Naive thymus-derived CD4-positive, alpha-beta T cell (primary cell): ENCODE measurements at regions of chr1 and their contacts with region 1.

Region 1: GRCh38 chr1:40404670-40405462 is 31.3 kb downstream of the SMAP2 start:
- DNase-seq: peak in 7 of 9 donors; percentile 65 to 84 (median 78)
- ATAC-seq: peak; percentile 85
- H3K4me3 ChIP-seq: no peak overlapping the region
- H3K4me3 Mint-ChIP-seq: peak overlapping the region; percentile 0 to 85 (median 71)
- H3K27ac ChIP-seq: peak overlapping the region; percentile 92
- H3K27ac Mint-ChIP-seq: peak overlapping the region; percentile 84 to 98 (median 92)
- H3K4me1 ChIP-seq: peaks cover 40 to 52% of the 10 kb centered on the region in 2 donors
- H3K4me1 Mint-ChIP-seq: peaks cover 42 to 92% (median 79%) of the 10 kb centered on the region in 7 donors
- H3K27me3 ChIP-seq: no peaks in the 10 kb centered on the region
- H3K27me3 Mint-ChIP-seq: no peaks in the 10 kb centered on the region

Region 2: DNA sequence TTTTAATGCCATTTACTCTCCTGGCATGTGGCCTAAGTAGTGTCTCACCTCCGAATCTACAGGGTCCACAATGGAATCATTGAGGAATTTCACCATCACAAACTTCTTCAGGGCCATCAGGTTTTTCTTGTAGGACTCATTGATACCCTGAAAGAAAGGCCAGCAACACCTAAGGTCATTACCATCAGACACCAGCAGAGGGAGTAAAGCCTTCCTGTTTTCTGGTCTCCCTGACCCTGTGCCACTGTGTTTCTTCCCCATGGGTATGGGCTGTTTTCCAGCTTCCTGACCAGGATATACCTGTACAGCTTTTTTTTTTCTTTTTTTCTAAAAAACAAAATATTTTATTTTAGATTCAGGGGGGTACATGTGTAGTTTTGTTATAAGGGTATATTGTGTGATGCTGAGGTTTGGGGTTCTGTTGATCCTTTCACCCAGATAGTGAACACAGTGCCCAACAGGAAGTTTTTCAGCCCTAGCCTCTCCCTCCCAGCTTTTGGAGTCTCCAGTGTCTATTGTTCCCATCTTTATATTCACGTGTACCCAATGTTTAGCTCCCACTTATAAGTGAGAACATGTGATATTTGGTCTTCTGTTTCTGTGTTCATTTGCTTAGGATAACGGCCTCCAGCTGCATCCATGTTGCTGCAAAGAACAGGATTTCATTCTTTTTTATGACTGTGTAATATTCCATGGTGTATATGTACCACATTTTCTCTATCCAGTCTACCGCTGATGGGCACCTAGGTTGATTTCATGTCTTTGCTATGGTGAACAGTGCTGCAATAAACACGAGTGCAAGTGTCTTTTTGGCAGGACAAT is 326.1 kb before region 1 on chr1:
- CTCF ChIA-PET with region 1: no interaction called
- POLR2A ChIA-PET with region 1: no interaction called
- intact Hi-C with region 1: loop called in 1 of 2 experiments (anchors 10 kb)
- DNase-seq: peak in 8 of 9 donors; percentile 13 to 59 (median 48)
- ATAC-seq: peak; percentile 88
- H3K4me3 ChIP-seq: no peak overlapping the region
- H3K4me3 Mint-ChIP-seq: no peak overlapping the region
- H3K27ac ChIP-seq: no peak overlapping the region
- H3K27ac Mint-ChIP-seq: peak overlapping the region in 6 of 9 donors; percentile 34 to 91 (median 66)
- H3K4me1 ChIP-seq: no peaks in the 10 kb centered on the region
- H3K4me1 Mint-ChIP-seq: peaks cover 0 to 24% (median 13%) of the 10 kb centered on the region in 7 donors
- H3K27me3 ChIP-seq: no peaks in the 10 kb centered on the region
- H3K27me3 Mint-ChIP-seq: no peaks in the 10 kb centered on the region

Region 3: DNA sequence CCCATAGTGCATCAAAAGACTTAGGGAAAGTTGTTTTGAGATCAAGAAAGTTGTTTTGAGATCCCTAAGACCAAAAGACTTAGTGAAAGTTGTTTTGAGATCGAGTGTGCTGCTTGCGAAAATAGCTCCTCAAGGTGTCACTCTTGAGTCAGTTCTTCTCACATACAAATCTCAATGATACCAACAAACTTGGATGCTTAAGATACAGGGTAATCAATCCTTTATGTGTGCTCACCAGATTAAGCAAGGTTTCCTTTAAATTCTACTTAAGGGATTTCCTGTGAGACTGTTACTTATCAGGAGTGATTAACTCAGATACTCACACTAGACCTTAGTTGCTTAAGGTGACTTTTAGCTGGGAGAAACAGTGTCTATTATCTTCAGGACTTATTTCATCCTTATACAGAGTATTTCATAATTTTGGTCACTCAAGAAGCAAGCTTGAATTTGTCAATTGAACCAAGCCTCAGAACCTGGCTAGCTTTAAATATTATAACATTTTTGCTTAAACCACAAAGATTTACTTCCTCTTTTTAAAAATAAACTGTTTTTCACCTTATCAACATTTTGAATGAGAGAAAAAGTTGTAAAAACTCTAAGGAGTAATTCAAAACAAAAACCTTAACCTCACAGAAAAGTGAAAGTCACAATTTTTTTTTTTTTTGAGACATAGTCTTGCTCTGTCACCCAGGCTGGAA is 251.6 kb before region 1 on chr1:
- CTCF ChIA-PET with region 1: interaction called, 40 read pairs
- POLR2A ChIA-PET with region 1: interaction called, 4 read pairs
- intact Hi-C with region 1: loop called (anchors 1 kb)
- DNase-seq: peak in 7 of 9 donors; percentile 26 to 68 (median 53)
- ATAC-seq: peak; percentile 88
- H3K4me3 ChIP-seq: no peak overlapping the region
- H3K4me3 Mint-ChIP-seq: peak overlapping the region in 7 of 10 donors; percentile 18 to 70 (median 52)
- H3K27ac ChIP-seq: no peak overlapping the region
- H3K27ac Mint-ChIP-seq: peak overlapping the region in 8 of 9 donors; percentile 16 to 88 (median 76)
- H3K4me1 ChIP-seq: no peaks in the 10 kb centered on the region
- H3K4me1 Mint-ChIP-seq: peaks cover 0 to 12% (median 10%) of the 10 kb centered on the region in 7 donors
- H3K27me3 ChIP-seq: no peaks in the 10 kb centered on the region
- H3K27me3 Mint-ChIP-seq: peaks cover 0 to 25% (median 0%) of the 10 kb centered on the region in 5 donors

Region 4: DNA sequence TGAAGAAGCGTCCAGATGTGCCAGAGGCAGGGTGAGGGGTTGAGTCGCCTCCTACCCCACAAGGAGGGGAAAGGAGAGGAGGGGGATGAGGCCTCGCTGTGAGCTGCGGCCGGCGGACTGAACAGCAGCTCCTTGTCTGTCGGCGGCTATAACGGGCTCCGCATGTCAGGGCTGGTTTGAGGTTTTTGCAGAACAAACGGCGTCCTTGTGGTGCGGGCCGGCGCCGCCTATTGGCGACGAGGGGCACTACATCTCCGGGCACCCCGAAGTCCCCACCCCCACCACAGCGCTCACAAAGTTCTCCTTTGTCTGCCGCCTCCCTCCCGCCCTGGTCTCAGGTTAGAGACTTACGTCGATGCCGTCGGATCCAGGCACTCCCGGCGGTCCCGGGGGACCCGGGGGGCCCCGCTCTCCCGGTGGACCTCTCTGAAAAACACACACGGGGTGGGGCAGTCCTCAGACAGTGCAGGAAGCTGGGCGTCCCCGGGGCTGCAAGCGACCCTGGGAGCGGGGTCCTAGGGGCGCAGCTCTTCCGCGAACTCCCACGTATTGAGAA is 89.5 kb before region 1 on chr1:
- CTCF ChIA-PET with region 1: interaction called, 17 read pairs
- POLR2A ChIA-PET with region 1: interaction called, 5 read pairs
- intact Hi-C with region 1: loop called in 1 of 2 experiments (anchors 1 kb)
- DNase-seq: peak; percentile 70 to 90 (median 86)
- ATAC-seq: peak; percentile 94
- H3K4me3 ChIP-seq: peak overlapping the region; percentile 73
- H3K4me3 Mint-ChIP-seq: peak overlapping the region; percentile 84 to 95 (median 88)
- H3K27ac ChIP-seq: peak overlapping the region; percentile 46
- H3K27ac Mint-ChIP-seq: peak overlapping the region; percentile 43 to 84 (median 76)
- H3K4me1 ChIP-seq: peaks cover 8% of the 10 kb centered on the region in 2 donors
- H3K4me1 Mint-ChIP-seq: peaks cover 11 to 66% (median 34%) of the 10 kb centered on the region in 7 donors
- H3K27me3 ChIP-seq: no peaks in the 10 kb centered on the region
- H3K27me3 Mint-ChIP-seq: peaks cover 7 to 36% (median 13%) of the 10 kb centered on the region in 5 donors

Region 5: GRCh38 chr1:40373338-40374283 is 31.3 kb before region 1 on chr1 and contains the start of gene SMAP2:
- CTCF ChIA-PET with region 1: interaction called, 22 read pairs
- POLR2A ChIA-PET with region 1: interaction called, 17 read pairs
- intact Hi-C with region 1: loop called (anchors 1 to 5 kb)
- DNase-seq: peak; percentile 94 to 98 (median 96)
- ATAC-seq: peak; percentile 91
- H3K4me3 ChIP-seq: peak within 1 kb of the TSS; percentile 99
- H3K4me3 Mint-ChIP-seq: peak within 1 kb of the TSS; percentile 94 to 100 (median 99)
- H3K27ac ChIP-seq: peak within 1 kb of the TSS; percentile 99
- H3K27ac Mint-ChIP-seq: peak within 1 kb of the TSS; percentile 97 to 100 (median 99)
- H3K4me1 ChIP-seq: peaks cover 33 to 36% of the 10 kb centered on the region in 2 donors
- H3K4me1 Mint-ChIP-seq: peaks cover 43 to 66% (median 54%) of the 10 kb centered on the region in 7 donors
- H3K27me3 ChIP-seq: no peaks in the 10 kb centered on the region
- H3K27me3 Mint-ChIP-seq: peaks cover 0 to 4% (median 0%) of the 10 kb centered on the region in 5 donors
- total RNA-seq, gene SMAP2: 144 to 210 (median 187) TPM

Region 6: DNA sequence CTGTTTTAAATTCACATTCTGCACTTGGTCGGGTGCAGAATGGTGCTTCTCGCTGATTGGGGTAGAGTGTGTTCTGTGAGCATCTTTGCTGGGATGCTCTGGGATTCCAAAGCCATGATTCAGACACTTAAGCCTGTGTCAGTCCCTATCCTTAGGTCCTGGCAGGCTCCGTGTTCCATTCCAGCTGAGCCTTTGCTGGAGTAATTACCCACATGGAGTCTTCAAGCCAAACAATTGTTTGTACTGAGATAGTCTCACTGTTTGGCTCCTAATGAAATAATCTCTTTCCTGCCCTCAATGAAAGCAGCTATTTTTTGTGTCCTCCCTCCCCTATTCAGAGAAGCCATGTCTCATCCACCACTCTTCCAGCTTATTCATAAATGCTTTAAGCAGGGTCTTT is 12.6 kb before region 1 on chr1:
- CTCF ChIA-PET with region 1: interaction called, 29 read pairs
- POLR2A ChIA-PET with region 1: interaction called, 168 read pairs
- intact Hi-C with region 1: loop called (anchors 1 kb)
- DNase-seq: no peak
- ATAC-seq: no peak
- H3K4me3 ChIP-seq: peak overlapping the region; percentile 4
- H3K4me3 Mint-ChIP-seq: peak overlapping the region; percentile 7 to 94 (median 81)
- H3K27ac ChIP-seq: peak overlapping the region; percentile 99
- H3K27ac Mint-ChIP-seq: peak overlapping the region; percentile 73 to 100 (median 98)
- H3K4me1 ChIP-seq: peaks cover 88 to 91% of the 10 kb centered on the region in 2 donors
- H3K4me1 Mint-ChIP-seq: peaks cover 57 to 94% (median 88%) of the 10 kb centered on the region in 7 donors
- H3K27me3 ChIP-seq: no peaks in the 10 kb centered on the region
- H3K27me3 Mint-ChIP-seq: no peaks in the 10 kb centered on the region